HEK293T (cell line): ENCODE measurements at regions of chr15 and their contacts with region 1.

Region 1: DNA sequence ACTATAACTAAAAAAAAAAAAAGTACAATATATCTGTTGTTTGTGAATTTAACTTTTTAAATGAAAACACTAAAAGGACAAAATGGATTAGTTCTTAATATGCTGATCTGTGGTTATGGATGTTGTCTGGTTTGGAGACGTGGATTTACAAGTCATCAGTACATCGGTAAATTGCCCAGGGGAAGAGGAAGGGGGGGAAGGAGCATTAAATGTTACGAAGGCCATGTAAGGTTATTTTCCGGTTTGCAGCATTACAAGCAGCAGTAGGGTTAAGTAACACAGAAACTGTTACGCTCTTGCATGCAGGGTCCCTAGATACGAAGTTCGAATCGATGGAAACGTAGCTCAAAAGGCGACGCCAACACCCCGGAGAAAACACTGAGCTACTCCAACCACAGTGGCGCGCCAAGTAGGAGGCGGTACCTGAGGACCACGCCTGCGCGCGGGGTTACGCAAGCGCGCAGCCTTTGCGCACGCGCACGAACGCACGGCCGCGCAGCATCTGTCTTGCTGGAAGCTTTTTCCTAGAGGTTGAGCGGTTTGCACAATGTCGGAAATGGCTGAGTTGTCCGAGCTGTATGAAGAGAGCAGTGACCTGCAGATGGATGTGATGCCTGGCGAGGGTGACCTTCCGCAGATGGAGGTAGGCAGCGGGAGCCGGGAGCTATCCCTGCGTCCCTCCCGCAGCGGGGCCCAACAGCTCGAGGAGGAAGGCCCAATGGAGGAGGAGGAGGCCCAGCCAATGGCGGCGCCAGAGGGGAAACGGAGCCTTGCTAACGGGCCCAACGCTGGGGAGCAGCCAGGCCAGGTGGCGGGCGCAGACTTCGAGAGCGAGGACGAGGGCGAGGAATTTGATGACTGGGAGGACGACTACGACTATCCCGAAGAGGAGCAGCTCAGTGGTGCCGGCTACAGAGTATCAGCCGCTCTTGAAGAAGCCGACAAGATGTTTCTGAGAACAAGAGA is at the start of gene EID1:
- DNase-seq: peak; percentile 80

Region 2: DNA sequence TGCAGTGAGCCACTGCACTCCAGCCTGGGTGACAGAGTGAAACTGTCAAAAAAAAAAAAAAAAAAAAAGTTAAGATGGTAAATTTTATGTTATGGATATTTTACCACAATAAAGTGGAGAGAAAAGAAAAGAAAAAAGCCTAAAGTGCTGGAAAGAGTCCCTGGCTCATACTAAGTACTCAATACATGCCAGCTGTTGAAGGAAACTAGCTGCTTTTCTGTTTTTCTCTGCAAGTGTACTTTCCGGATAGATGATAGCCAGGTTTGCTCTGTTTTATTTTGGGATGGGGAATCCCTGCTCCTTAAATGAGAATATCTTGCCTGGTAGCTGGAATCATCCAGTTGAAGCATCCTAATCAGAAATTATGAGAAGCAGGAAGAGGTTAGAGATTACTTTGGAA is 10.9 kb after region 1 on chr15:
- CTCF ChIA-PET with region 1: no interaction called
- POLR2A ChIA-PET with region 1: interaction called, 51 read pairs
- DNase-seq: no peak

Region 3: GRCh38 chr15:48905847-48906246 is 27.9 kb after region 1 on chr15:
- CTCF ChIA-PET with region 1: no interaction called
- POLR2A ChIA-PET with region 1: interaction called, 13 read pairs
- DNase-seq: no peak

Region 4: GRCh38 chr15:48925714-48926223 is 47.9 kb after region 1 on chr15:
- CTCF ChIA-PET with region 1: no interaction called
- POLR2A ChIA-PET with region 1: interaction called, 11 read pairs
- DNase-seq: no peak

Region 5: GRCh38 chr15:48963524-48964113 is 85.7 kb after region 1 on chr15 and contains the start of gene SHC4:
- CTCF ChIA-PET with region 1: interaction called, 3 read pairs
- POLR2A ChIA-PET with region 1: interaction called, 16 read pairs
- DNase-seq: peak; percentile 58